GM12878 (cell line): ENCODE measurements at regions of chr3 and their contacts with region 1.

Region 1: DNA sequence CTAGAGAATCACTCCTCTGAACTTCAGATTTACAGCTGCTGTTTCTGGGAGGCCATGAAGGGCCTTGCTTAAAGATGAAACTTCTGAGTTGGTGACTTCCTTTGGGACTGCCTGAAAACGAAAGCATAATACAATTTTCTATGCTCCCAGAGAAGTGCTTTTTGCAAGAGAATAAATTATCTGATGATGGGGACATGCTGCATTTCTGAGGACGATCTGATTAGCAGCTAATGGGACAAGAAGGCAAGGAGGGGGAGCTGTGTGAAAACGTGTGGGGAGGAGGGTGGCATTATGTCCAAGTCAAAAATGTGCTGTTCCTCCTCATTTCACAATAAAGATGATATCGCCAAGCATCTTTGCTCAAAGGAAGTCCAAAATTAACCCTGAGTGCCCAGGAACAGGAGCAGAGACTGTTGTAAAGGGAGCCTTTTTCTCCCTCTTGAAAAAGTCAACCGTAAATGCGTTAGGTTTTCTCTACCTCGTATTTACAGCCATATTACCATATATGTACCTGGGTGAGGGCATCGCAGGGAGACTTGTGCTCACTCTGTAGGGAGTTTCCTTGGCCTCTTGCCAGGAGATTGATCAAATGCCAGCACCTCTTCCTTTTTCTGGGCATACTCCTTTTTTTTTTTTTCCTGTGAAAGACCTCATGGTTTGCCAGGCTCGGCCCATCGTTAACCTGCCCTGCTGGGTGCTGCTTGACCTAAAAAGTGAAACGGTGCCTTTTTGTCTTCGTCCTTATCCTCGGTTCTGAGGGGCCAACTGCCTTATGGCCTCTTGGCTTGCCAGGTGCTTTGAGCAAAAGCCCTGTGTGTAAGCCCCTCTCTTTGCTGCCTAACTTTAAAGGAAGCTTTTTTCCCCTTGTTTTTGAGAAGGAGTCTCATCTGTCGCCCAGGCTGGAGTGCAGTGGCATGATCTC is 11.5 kb downstream of the ITPR1 start:
- DNase-seq: no peak
- ATAC-seq: 0 out of 3 replicates have a peak, but pooled peaks have one; percentile 4
- H3K4me3 ChIP-seq: peak overlapping the region; percentile 52
- H3K27ac ChIP-seq: peak overlapping the region; percentile 42
- H3K4me1 ChIP-seq: peaks cover 54% of the 10 kb centered on the region
- H3K27me3 ChIP-seq: no peaks in the 10 kb centered on the region
- CTCF ChIP-seq: no peak
- EP300 ChIP-seq: no peak
- POLR2A ChIP-seq: no peak
- RAD21 ChIP-seq: no peak

Region 2: GRCh38 chr3:4409415-4409814 is 95.2 kb before region 1 on chr3:
- CTCF ChIA-PET with region 1: no interaction called
- POLR2A ChIA-PET with region 1: no interaction called
- RAD21 ChIA-PET with region 1: interaction called, 3 read pairs
- SMC1A ChIA-PET with region 1: interaction called, 3 read pairs
- in situ Hi-C with region 1: no loop called
- intact Hi-C with region 1: loop called (anchors 1 kb)
- DNase-seq: no peak
- ATAC-seq: peak; percentile 67
- H3K4me3 ChIP-seq: no peak overlapping the region
- H3K27ac ChIP-seq: no peak overlapping the region
- H3K4me1 ChIP-seq: peaks cover 18% of the 10 kb centered on the region
- H3K27me3 ChIP-seq: no peaks in the 10 kb centered on the region
- CTCF ChIP-seq: no peak
- EP300 ChIP-seq: no peak
- POLR2A ChIP-seq: no peak
- RAD21 ChIP-seq: no peak

Region 3: DNA sequence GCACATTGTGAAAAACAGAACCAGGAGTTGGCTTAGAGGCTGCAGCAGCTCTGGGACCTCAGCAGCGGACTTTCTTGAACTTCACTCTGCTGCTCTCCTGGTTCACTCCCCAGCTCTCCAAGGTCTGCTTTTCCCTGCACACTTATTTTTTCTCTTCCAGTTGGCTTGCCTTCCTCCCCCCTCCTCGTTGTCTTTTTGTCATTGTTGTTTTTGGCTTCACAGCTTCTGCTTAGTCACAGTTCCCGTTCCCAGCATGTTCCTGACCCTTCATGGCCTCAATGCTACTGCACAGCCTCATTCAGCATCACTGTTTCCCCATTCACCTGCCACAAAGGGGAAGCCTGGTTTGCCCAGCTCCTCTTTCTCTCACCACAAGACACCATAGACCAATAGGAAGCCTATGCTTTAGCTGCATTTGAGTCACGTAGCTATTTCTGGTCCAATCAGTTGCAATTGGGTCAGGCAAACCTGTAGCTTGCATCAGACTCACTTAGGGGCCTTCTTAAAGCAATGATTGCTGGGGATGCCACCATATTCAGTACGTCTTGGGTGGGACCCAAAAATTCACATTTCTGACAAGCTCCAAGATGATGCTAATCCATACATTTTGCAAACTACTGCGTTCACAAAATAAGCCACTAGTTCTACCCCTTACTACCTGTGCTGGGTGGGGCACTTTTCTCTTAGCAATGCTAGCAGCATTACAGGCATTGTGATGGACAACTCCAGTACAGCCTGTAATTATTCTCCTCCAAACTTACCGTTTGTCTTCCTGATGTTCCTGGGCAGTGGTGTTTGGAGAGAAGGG is 29.7 kb before region 1 on chr3:
- CTCF ChIA-PET with region 1: interaction called, 11 read pairs
- POLR2A ChIA-PET with region 1: interaction called, 6 read pairs
- RAD21 ChIA-PET with region 1: interaction called, 13 read pairs
- SMC1A ChIA-PET with region 1: interaction called, 16 read pairs
- in situ Hi-C with region 1: no loop called
- intact Hi-C with region 1: no loop called
- DNase-seq: peak; percentile 81
- ATAC-seq: peak; percentile 91
- H3K4me3 ChIP-seq: peak overlapping the region; percentile 35; the same call in 1 of the 2 replicates
- H3K27ac ChIP-seq: peak overlapping the region; percentile 64
- H3K4me1 ChIP-seq: peaks cover 18% of the 10 kb centered on the region
- H3K27me3 ChIP-seq: no peaks in the 10 kb centered on the region
- CTCF ChIP-seq: no peak
- EP300 ChIP-seq: no peak
- POLR2A ChIP-seq: peak; percentile 42; the same call in 1 of the 2 replicates
- RAD21 ChIP-seq: no peak

Region 4: GRCh38 chr3:4517643-4518311 is 13.2 kb after region 1 on chr3:
- CTCF ChIA-PET with region 1: interaction called, 7 read pairs
- POLR2A ChIA-PET with region 1: interaction called, 14 read pairs
- RAD21 ChIA-PET with region 1: interaction called, 6 read pairs
- SMC1A ChIA-PET with region 1: interaction called, 22 read pairs
- in situ Hi-C with region 1: no loop called
- intact Hi-C with region 1: no loop called
- DNase-seq: no peak
- ATAC-seq: peak; percentile 68
- H3K4me3 ChIP-seq: no peak overlapping the region
- H3K27ac ChIP-seq: no peak overlapping the region
- H3K4me1 ChIP-seq: peaks cover 8% of the 10 kb centered on the region
- H3K27me3 ChIP-seq: no peaks in the 10 kb centered on the region
- CTCF ChIP-seq: no peak
- EP300 ChIP-seq: no peak
- POLR2A ChIP-seq: no peak
- RAD21 ChIP-seq: no peak

Region 5: GRCh38 chr3:4615750-4616149 is 111.1 kb after region 1 on chr3:
- CTCF ChIA-PET with region 1: no interaction called
- POLR2A ChIA-PET with region 1: interaction called, 14 read pairs
- RAD21 ChIA-PET with region 1: no interaction called
- SMC1A ChIA-PET with region 1: no interaction called
- in situ Hi-C with region 1: no loop called
- intact Hi-C with region 1: no loop called
- DNase-seq: no peak
- ATAC-seq: no peak
- H3K4me3 ChIP-seq: no peak overlapping the region
- H3K27ac ChIP-seq: no peak overlapping the region
- H3K4me1 ChIP-seq: no peaks in the 10 kb centered on the region
- H3K27me3 ChIP-seq: no peaks in the 10 kb centered on the region
- CTCF ChIP-seq: no peak
- EP300 ChIP-seq: no peak
- POLR2A ChIP-seq: no peak
- RAD21 ChIP-seq: no peak

Region 6: DNA sequence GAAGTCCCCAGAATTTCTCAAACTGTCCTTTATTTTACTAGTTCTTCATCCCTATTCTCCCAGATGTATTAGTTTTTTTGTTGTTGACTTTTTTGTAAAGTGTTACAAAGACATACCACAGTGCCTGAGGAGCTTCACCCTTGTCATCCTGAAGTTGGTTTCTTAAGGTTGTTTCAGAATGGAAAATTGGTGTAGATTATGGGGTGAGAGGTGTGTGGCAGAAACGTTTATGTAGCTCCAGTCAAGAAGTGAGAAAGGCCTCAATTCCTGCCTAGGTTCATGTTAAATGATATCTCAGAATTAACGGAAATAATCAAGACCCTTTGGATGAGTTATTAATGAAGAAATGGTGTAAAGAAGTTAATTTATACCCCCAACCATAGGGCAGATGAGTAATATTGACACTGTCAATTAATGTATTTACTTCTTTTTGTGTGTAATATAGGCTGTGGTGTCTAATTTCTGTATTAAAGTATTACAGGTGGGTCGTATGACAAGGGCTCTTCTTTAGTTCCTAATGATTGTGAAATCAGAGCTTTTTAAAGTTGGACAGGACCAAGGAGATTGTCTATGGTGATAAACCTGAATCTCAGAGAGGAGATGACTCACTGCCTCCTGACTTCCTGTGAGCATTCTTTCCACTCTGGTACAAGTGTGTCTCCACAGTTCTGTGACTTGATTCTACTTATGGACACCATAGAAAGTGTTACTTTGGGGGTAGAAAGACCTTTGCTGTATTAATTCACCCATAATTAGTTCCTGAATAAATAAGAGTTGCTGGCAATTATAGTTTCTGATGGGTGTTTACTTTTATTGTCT is 689.9 kb after region 1 on chr3:
- CTCF ChIA-PET with region 1: no interaction called
- POLR2A ChIA-PET with region 1: interaction called, 4 read pairs
- RAD21 ChIA-PET with region 1: no interaction called
- SMC1A ChIA-PET with region 1: no interaction called
- in situ Hi-C with region 1: loop called (anchors 10 kb)
- intact Hi-C with region 1: no loop called
- DNase-seq: no peak
- ATAC-seq: peak; percentile 49
- H3K4me3 ChIP-seq: peak overlapping the region; percentile 39; the same call in 1 of the 2 replicates
- H3K27ac ChIP-seq: peak overlapping the region; percentile 94
- H3K4me1 ChIP-seq: peaks cover 57% of the 10 kb centered on the region
- H3K27me3 ChIP-seq: no peaks in the 10 kb centered on the region
- CTCF ChIP-seq: no peak
- EP300 ChIP-seq: no peak
- POLR2A ChIP-seq: peak; percentile 20; the same call in 1 of the 2 replicates
- RAD21 ChIP-seq: no peak